Pancreas (tissue), 10 donors: ENCODE measurements at regions of chr6 and their contacts with region 1.

Region 1: GRCh38 chr6:139364302-139364981 is 10.0 kb downstream of the CITED2 start:
- DNase-seq: no peak
- ATAC-seq: peak in 3 of 4 donors; percentile 74 to 85 (median 79)
- H3K4me3 ChIP-seq: no peak overlapping the region
- H3K27ac ChIP-seq: no peak overlapping the region
- H3K4me1 ChIP-seq: peaks cover 0 to 7% (median 0%) of the 10 kb centered on the region in 3 donors
- H3K27me3 ChIP-seq: no peaks in the 10 kb centered on the region
- CTCF ChIP-seq: peak; percentile 44 to 61 (median 50)

Region 2: GRCh38 chr6:138817822-138818308 is 546.6 kb before region 1 on chr6:
- intact Hi-C with region 1: loop called in 2 of 3 experiments (anchors 5 to 10 kb)
- DNase-seq: peak in 4 of 6 donors; percentile 63 to 76 (median 68)
- ATAC-seq: peak; percentile 88 to 94 (median 92)
- H3K4me3 ChIP-seq: no peak overlapping the region
- H3K27ac ChIP-seq: peak overlapping the region; percentile 5 to 66 (median 43)
- H3K4me1 ChIP-seq: peaks cover 0 to 4% (median 0%) of the 10 kb centered on the region in 3 donors
- H3K27me3 ChIP-seq: no peaks in the 10 kb centered on the region
- CTCF ChIP-seq: no peak

Region 3: GRCh38 chr6:139219271-139219729 is 145.1 kb before region 1 on chr6:
- intact Hi-C with region 1: loop called in 2 of 3 experiments (anchors 10 kb)
- DNase-seq: peak; percentile 71 to 90 (median 81)
- ATAC-seq: peak; percentile 100
- H3K4me3 ChIP-seq: no peak overlapping the region
- H3K27ac ChIP-seq: peak overlapping the region in 2 of 4 donors; percentile 40 to 55
- H3K4me1 ChIP-seq: no peaks in the 10 kb centered on the region
- H3K27me3 ChIP-seq: no peaks in the 10 kb centered on the region
- CTCF ChIP-seq: peak; percentile 10 to 60 (median 52)